ENCODE measurements at regions of chrX and their contacts with region 1.

Region 1: DNA sequence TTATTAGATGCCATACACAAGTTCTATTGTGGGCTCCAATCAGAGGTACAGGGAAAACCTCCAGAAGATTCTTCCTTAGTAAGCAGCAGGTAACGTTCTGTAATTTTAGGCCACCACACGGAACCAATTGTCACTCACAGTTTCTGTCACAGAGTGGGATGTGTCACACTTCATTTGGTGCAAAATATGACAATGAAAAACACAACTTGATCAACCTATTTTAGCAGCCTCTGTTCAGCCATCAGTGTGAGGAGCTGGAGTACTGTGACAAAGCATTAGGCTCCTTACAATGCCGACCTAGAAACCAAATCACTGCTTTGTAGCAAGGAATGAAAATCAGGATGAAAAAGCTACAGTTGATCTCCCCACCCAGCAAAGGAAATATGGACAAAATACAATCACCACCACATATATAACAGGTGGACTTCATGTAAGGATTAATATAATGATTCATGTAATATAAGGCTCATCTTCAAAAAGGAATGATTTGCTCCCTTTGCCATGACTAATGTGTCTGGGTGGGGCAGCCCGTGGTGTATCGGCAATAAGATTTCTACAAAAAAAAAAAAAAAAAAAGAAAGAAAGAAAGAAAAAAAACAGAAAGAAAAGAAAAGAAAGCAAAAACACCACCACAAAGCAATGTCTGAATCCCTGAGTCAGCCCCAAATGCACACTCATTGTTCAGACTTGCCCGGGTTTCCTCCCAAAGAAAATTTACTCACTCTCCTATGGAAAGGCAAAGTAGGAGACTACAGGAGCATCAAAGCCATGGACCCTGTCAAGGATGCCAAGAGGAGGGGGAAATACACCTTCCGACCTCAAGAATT is 36.0 kb downstream of the SLC9A7 start:
- DNase-seq: no peak
- H3K4me3 ChIP-seq: no peak overlapping the region
- H3K27ac ChIP-seq: no peak overlapping the region
- H3K4me1 ChIP-seq: no peaks in the 10 kb centered on the region
- H3K27me3 ChIP-seq: peaks cover 0 to 14% of the 10 kb centered on the region in 2 donors
- CTCF ChIP-seq: no peak
- POLR2A ChIP-seq: no peak

Region 2: DNA sequence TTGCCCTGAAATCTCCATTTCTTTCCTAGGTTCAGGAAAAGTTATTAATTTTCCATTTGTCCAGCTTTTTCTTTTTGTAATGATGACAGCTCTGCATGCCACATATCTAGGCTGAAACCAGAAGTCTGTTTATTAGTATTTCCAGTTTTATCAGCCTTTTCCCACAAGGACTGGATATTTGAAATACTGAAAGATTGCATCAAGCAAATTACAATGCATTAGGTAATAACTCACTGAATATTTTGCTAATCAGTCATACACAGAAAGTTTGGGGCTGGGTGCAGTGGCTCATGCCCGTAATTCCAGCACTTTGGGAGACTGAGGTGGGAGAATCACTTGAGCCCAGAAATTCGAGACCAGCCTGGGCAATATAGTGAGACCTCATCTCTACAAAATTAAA is 14.5 kb after region 1 on chrX:
- intact Hi-C with region 1: loop called (anchors 2 kb)
- DNase-seq: no peak
- H3K4me3 ChIP-seq: no peak overlapping the region
- H3K27ac ChIP-seq: no peak overlapping the region
- H3K4me1 ChIP-seq: no peaks in the 10 kb centered on the region
- H3K27me3 ChIP-seq: no peaks in the 10 kb centered on the region
- CTCF ChIP-seq: no peak
- POLR2A ChIP-seq: no peak

Region 3: DNA sequence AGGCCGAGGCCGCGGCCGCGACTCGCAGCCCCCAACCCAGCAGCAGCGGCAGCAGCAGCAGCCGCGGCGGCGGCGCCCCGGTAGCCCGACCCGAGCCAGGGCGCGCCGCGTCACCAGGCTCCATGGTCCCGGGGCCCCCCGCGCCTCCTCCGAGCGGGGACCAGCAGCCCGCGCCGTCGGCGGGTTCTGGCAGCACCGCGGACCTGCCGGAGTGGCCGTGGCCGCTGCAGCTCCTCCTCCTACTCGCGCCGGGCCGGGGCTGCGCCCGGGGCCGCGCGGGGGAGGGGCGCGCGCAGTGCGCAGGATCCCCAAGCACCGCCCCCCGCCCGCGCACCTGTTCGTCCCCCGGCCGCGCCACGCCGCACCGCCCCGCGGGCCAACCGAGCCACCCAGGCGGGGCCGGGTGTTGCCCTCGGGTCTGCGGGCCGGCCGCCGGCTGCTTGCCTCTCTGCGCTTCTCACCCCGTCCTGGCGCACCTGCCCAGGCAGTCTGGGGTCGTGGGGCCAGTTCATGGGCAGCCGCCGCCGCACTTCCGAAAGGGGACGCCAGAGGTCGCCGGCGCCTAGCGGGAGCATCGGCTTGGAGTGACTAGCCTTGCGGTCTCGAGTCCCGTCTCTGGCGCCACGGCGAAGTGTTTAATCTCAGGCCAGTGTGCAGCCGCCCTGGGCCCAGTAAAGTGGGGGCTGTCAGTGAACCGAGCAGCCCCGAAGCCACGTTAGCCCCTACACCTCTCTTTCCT is 36.1 kb after region 1 on chrX and contains the start of gene SLC9A7:
- intact Hi-C with region 1: no loop called
- DNase-seq: peak; percentile 63 to 69
- H3K4me3 ChIP-seq: peak within 1 kb of the TSS; percentile 35 to 80 (median 63)
- H3K27ac ChIP-seq: peak within 1 kb of the TSS; percentile 68 to 83
- H3K4me1 ChIP-seq: no peaks in the 10 kb centered on the region
- H3K27me3 ChIP-seq: peaks cover 0 to 31% of the 10 kb centered on the region in 2 donors
- CTCF ChIP-seq: peak; percentile 58 to 85 (median 83)
- POLR2A ChIP-seq: no peak
- total RNA-seq, gene SLC9A7: 1.6 to 28.1 (median 12.8) TPM

Region 4: GRCh38 chrX:46912098-46912602 is 189.2 kb after region 1 on chrX and contains the start of gene JADE3:
- intact Hi-C with region 1: no loop called
- DNase-seq: peak; percentile 43 to 70
- H3K4me3 ChIP-seq: peak within 1 kb of the TSS; percentile 60 to 83 (median 62)
- H3K27ac ChIP-seq: peak within 1 kb of the TSS; percentile 68 to 87
- H3K4me1 ChIP-seq: no peaks in the 10 kb centered on the region
- H3K27me3 ChIP-seq: peaks cover 0 to 19% of the 10 kb centered on the region in 2 donors
- CTCF ChIP-seq: no peak
- POLR2A ChIP-seq: no peak
- total RNA-seq, gene JADE3: 7.5 to 20.8 (median 12.8) TPM